ENCODE measurements at regions of chr11 and their contacts with region 1.

Region 1: DNA sequence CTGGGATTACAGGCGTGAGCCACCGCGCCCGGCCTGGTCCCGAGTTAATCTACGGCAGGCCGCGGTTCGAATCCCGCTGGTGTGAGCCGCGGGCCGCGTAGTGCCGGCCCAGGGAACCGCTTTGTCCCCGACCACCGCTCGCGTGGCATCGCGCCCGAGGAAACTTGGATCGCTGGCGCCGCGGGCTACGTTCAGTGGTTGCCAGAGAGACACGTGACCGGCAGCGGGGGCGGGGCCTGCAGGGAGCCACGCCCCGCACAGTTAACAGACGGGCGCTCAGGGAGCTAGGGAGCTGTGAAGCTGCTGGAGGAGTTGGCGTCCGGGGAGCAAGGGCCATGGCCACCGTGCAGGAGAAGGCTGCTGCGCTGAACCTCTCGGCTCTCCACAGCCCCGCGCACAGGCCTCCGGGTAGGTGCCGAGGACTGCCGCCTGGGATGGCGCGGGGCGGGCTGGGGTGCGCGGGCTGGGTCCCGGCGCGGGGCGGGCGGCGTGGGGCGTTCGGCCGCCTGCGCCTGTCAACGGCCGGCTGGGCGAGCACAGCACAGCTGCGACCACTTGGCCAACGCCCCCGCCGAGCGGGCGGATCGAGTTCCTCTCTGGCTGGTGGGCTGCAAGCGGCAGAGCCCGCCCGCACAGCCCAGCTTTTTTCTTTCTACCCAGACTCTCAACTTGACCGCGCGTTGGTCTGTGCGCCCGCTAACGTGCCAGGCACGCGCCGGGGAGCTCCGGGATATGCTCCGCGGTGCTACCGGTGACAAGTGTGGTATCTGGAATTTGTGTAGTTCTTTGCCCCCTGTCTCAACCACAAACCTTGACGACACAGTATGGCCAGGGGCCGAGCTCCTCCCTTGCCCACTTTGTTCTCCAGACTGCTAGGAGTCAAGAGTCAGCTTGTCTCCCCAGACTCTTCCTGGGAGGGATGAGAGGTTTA is at the start of gene DEPDC7:
- DNase-seq: peak; percentile 83 to 85
- ATAC-seq: peak; percentile 83 to 95 (median 91)
- H3K4me3 ChIP-seq: peak within 1 kb of the TSS; percentile 59
- H3K4me3 Mint-ChIP-seq: peak within 1 kb of the TSS; percentile 95
- H3K27ac ChIP-seq: no peak within 1 kb of the TSS
- H3K27ac Mint-ChIP-seq: peak within 1 kb of the TSS in 1 of 2 donors; percentile 83
- H3K4me1 ChIP-seq: peaks cover 21% of the 10 kb centered on the region
- H3K4me1 Mint-ChIP-seq: peaks cover 16 to 23% of the 10 kb centered on the region in 2 donors
- H3K27me3 ChIP-seq: peaks cover 13% of the 10 kb centered on the region
- H3K27me3 Mint-ChIP-seq: peaks cover 16 to 23% of the 10 kb centered on the region in 2 donors
- CTCF ChIP-seq: no peak
- total RNA-seq, gene DEPDC7: 0.80 to 1.8 (median 1.2) TPM

Region 2: DNA sequence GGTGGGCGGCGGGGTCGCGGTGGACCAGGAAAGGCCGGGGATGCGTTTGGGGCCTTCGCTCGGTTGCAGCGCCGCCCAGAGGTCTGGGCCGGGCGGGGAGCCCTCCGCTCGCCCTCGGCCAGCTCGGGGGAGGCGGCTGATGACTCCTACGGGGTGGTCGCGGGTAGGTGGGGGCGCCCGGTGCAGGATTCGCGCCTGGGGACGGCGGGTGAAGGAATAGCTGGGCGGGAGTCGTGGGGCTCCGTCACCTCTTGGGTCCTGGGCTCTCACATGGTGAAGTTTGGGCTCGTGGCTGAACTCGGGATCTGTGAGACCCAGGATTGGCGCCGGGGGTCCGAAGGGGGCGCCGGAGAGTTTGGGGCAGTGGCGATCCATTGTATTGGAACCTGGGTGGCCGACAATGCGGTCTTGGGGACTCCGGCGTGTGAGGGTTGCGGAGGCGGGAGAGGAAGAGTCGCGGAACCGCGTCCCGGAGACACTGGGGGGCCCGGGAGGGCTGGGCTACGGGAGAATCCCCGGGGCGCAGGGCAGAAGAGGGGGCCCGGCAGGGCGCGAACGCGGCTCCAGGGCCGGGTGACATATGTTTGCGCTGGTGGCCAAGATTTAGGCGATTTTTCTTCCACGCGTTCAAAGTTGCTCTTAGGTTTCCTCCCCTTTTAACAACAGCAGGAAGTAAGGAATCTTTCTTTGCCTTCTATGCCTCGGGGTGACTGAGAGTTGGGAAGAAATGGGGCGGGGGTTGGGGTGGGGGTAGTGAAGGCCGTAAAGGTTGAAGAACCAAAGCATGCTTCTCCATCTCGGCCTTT is 122.3 kb before region 1 on chr11:
- intact Hi-C with region 1: loop called (anchors 5 kb)
- DNase-seq: peak; percentile 57 to 70
- ATAC-seq: peak; percentile 40 to 70 (median 59)
- H3K4me3 ChIP-seq: peak overlapping the region; percentile 74
- H3K4me3 Mint-ChIP-seq: peak overlapping the region; percentile 94
- H3K27ac ChIP-seq: peak overlapping the region; percentile 51
- H3K27ac Mint-ChIP-seq: peak overlapping the region; percentile 59 to 93
- H3K4me1 ChIP-seq: peaks cover 11% of the 10 kb centered on the region
- H3K4me1 Mint-ChIP-seq: peaks cover 31 to 34% of the 10 kb centered on the region in 2 donors
- H3K27me3 ChIP-seq: no peaks in the 10 kb centered on the region
- H3K27me3 Mint-ChIP-seq: no peaks in the 10 kb centered on the region
- CTCF ChIP-seq: peak; percentile 44

Region 3: GRCh38 chr11:33039274-33040032 is 23.6 kb after region 1 on chr11 and contains the start of gene TCP11L1:
- intact Hi-C with region 1: loop called (anchors 1 kb)
- DNase-seq: peak; percentile 78 to 89
- ATAC-seq: peak; percentile 88 to 94 (median 89)
- H3K4me3 ChIP-seq: peak within 1 kb of the TSS; percentile 99
- H3K4me3 Mint-ChIP-seq: peak within 1 kb of the TSS; percentile 96
- H3K27ac ChIP-seq: peak within 1 kb of the TSS; percentile 92
- H3K27ac Mint-ChIP-seq: peak within 1 kb of the TSS; percentile 90 to 93
- H3K4me1 ChIP-seq: peaks cover 12% of the 10 kb centered on the region
- H3K4me1 Mint-ChIP-seq: peaks cover 11% of the 10 kb centered on the region in 2 donors
- H3K27me3 ChIP-seq: no peaks in the 10 kb centered on the region
- H3K27me3 Mint-ChIP-seq: peaks cover 2 to 8% of the 10 kb centered on the region in 2 donors
- CTCF ChIP-seq: no peak
- total RNA-seq, gene TCP11L1: 20.7 to 24.5 (median 22.7) TPM

Region 4: GRCh38 chr11:33195462-33196173 is 179.7 kb after region 1 on chr11:
- intact Hi-C with region 1: no loop called
- DNase-seq: no peak
- ATAC-seq: no peak
- H3K4me3 ChIP-seq: no peak overlapping the region
- H3K4me3 Mint-ChIP-seq: no peak overlapping the region
- H3K27ac ChIP-seq: no peak overlapping the region
- H3K27ac Mint-ChIP-seq: no peak overlapping the region
- H3K4me1 ChIP-seq: peaks cover 3% of the 10 kb centered on the region
- H3K4me1 Mint-ChIP-seq: no peaks in the 10 kb centered on the region
- H3K27me3 ChIP-seq: no peaks in the 10 kb centered on the region
- H3K27me3 Mint-ChIP-seq: no peaks in the 10 kb centered on the region
- CTCF ChIP-seq: no peak